AG04449 (cell line): ENCODE measurements at regions of chr5 and their contacts with region 1.

Region 1: GRCh38 chr5:157948738-157949410 is 89.9 kb upstream of the CLINT1 start:
- DNase-seq: peak; percentile 84
- H3K4me3 ChIP-seq: no peak overlapping the region
- CTCF ChIP-seq: peak; percentile 84

Region 2: GRCh38 chr5:157820593-157821252 is 128.2 kb before region 1 on chr5:
- CTCF ChIA-PET with region 1: interaction called, 36 read pairs
- POLR2A ChIA-PET with region 1: no interaction called
- DNase-seq: no peak
- H3K4me3 ChIP-seq: no peak overlapping the region
- CTCF ChIP-seq: peak; percentile 8

Region 3: DNA sequence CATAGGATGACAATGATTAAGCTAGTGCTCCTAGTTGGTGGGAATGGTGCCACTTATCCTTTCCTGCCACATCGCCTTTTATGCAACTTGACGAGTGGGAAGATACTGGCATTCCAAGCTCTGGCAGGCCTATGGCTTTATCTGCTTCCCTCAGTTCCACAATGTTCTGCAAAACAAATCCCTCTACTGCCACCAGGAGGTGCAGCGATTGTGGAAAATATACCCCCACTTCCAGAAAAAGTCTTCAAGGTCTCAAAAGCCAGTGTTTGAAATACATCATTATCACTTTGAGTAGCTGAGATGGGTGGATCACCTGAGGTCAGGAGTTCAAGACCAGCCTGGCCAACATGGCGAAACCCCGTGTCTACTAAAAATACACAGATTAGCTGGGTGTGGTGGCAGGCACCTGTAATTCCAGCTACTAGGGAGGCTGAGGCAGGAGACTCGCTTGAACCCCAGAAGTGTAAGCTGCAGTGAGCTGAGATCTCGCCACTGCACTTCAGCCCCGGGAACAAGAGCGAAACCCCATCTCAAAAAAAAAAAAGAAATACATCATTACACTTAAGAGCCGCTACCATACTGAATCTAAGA is 93.4 kb before region 1 on chr5:
- CTCF ChIA-PET with region 1: interaction called, 22 read pairs
- POLR2A ChIA-PET with region 1: interaction called, 3 read pairs
- DNase-seq: no peak
- H3K4me3 ChIP-seq: no peak overlapping the region
- CTCF ChIP-seq: peak; percentile 61

Region 4: GRCh38 chr5:157934600-157934999 is 14.3 kb before region 1 on chr5:
- CTCF ChIA-PET with region 1: interaction called, 26 read pairs
- POLR2A ChIA-PET with region 1: no interaction called
- DNase-seq: no peak
- H3K4me3 ChIP-seq: no peak overlapping the region
- CTCF ChIP-seq: no peak

Region 5: DNA sequence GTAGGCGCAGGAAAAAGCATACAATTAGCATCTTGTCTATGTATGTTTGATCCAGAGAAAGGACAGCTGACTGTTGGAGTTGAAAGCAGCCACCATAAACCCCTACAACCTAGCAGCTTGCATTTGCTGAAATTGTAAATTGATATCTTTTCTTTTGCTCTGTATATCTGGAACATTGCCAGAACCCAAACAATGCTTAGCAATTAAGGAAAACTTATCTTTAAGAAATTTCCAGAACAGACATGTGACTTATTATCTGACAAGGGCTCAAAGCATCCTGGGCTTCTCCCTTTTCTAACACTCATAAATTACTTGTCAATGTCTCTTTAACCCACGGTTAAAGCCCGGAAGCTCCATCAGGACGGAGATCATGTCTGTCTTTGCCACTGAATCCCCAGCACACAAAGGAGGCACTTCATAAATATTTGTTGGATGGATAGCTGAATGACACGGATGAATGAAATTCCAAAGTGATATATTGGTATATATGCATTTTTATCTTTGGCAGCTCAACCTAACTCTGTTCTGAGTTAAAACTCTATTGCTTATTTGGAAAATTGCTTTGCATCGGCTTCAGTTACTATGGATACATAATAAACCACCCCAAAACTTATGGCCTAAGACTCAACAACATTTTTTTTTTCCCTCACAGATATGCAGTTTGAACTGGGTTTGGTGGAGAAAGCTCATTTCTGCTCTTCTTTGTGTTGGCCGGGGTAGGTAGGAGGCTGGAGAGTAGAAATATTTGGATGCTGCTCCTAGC is 13.1 kb after region 1 on chr5:
- CTCF ChIA-PET with region 1: interaction called, 15 read pairs
- POLR2A ChIA-PET with region 1: no interaction called
- DNase-seq: no peak
- H3K4me3 ChIP-seq: no peak overlapping the region
- CTCF ChIP-seq: no peak

Region 6: GRCh38 chr5:157971571-157972216 is 22.8 kb after region 1 on chr5:
- CTCF ChIA-PET with region 1: interaction called, 12 read pairs
- POLR2A ChIA-PET with region 1: interaction called, 4 read pairs
- DNase-seq: no peak
- H3K4me3 ChIP-seq: no peak overlapping the region
- CTCF ChIP-seq: no peak